Uterus (tissue), 4 donors: ENCODE measurements at regions of chr10 and their contacts with region 1.

Region 1: GRCh38 chr10:72834183-72834825 is 59.2 kb upstream of the OIT3 start:
- DNase-seq: peak; percentile 39 to 62
- H3K4me3 ChIP-seq: no peak overlapping the region
- H3K27ac ChIP-seq: peak overlapping the region in 1 of 2 donors; percentile 31
- H3K4me1 ChIP-seq: peaks cover 0 to 10% of the 10 kb centered on the region in 2 donors
- H3K27me3 ChIP-seq: no peaks in the 10 kb centered on the region
- CTCF ChIP-seq: peak; percentile 61 to 88 (median 74)
- POLR2A ChIP-seq: no peak

Region 2: DNA sequence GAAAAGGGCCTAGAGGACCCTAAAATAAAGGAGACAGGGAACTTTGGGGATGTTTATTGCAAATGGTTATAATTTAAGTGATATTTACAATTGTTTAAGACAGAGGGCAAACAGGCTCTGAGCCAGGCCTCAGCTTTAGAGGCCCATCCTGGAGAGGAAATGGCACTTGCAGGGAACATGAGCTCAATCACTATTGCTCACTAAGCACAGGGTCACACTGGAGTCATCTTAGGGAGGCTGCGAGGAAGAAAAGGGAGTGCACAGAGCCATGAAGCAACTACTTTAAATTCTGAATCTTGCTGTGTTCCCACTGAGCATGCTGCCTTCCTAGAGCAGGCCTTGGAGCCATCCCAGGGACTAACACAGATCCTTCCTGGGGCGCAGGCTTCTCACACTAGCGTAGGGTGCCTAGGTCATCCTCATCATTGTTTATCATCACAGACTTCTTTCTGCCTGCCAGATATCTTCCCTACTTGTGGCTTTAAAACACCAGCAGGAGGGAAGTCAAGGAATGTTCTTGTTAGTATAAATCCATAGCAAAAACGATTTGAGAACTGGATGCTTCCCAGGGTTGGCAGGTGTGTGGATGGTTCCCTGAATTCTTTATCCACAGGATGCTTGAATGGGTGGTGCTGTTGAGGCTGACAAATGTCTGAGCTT is 466.9 kb before region 1 on chr10:
- intact Hi-C with region 1: loop called (anchors 5 kb)
- DNase-seq: no peak
- H3K4me3 ChIP-seq: no peak overlapping the region
- H3K27ac ChIP-seq: no peak overlapping the region
- H3K4me1 ChIP-seq: peaks cover 0 to 3% of the 10 kb centered on the region in 2 donors
- H3K27me3 ChIP-seq: no peaks in the 10 kb centered on the region
- CTCF ChIP-seq: no peak
- POLR2A ChIP-seq: no peak

Region 3: GRCh38 chr10:72692057-72692910 is 142.0 kb before region 1 on chr10 and contains the start of gene MCU:
- intact Hi-C with region 1: loop called (anchors 10 kb)
- DNase-seq: peak; percentile 95
- H3K4me3 ChIP-seq: peak within 1 kb of the TSS; percentile 67 to 88
- H3K27ac ChIP-seq: peak within 1 kb of the TSS; percentile 89 to 95
- H3K4me1 ChIP-seq: no peaks in the 10 kb centered on the region
- H3K27me3 ChIP-seq: no peaks in the 10 kb centered on the region
- CTCF ChIP-seq: peak in 1 of 4 experiments; percentile 17
- POLR2A ChIP-seq: peak; percentile 89 to 98
- total RNA-seq, gene MCU: 13.2 to 35.8 (median 24.6) TPM